ENCODE measurements at regions of chr2 and their contacts with region 1.

Region 1: GRCh38 chr2:66587216-66587615 is 152.3 kb downstream of the MEIS1 start:
- DNase-seq: peak; percentile 52
- ATAC-seq: peak; percentile 97
- H3K4me3 ChIP-seq: no peak overlapping the region
- H3K27ac ChIP-seq: no peak overlapping the region
- H3K4me1 ChIP-seq: no peaks in the 10 kb centered on the region
- H3K27me3 ChIP-seq: peaks cover 1 to 16% of the 10 kb centered on the region in 2 experiments; a peak in 3 of 5 replicates
- CTCF ChIP-seq: peak; percentile 77
- EP300 ChIP-seq: no peak
- POLR2A ChIP-seq: no peak
- RAD21 ChIP-seq: peak; percentile 69

Region 2: GRCh38 chr2:66982766-66983165 is 395.6 kb after region 1 on chr2:
- CTCF ChIA-PET with region 1: no interaction called
- POLR2A ChIA-PET with region 1: no interaction called
- in situ Hi-C with region 1: no loop called
- intact Hi-C with region 1: no loop called
- DNase-seq: no peak
- ATAC-seq: no peak
- H3K4me3 ChIP-seq: no peak overlapping the region
- H3K27ac ChIP-seq: no peak overlapping the region
- H3K4me1 ChIP-seq: no peaks in the 10 kb centered on the region
- H3K27me3 ChIP-seq: no peaks in the 10 kb centered on the region
- CTCF ChIP-seq: peak; percentile 21; the same call in 1 of the 2 replicates
- EP300 ChIP-seq: no peak
- POLR2A ChIP-seq: no peak
- RAD21 ChIP-seq: no peak

Region 3: GRCh38 chr2:67234439-67234838 is 647.2 kb after region 1 on chr2:
- CTCF ChIA-PET with region 1: no interaction called
- POLR2A ChIA-PET with region 1: no interaction called
- in situ Hi-C with region 1: no loop called
- intact Hi-C with region 1: loop called (anchors 5 kb)
- DNase-seq: no peak
- ATAC-seq: peak; percentile 48; the same call in 2 of the 3 replicates
- H3K4me3 ChIP-seq: no peak overlapping the region
- H3K27ac ChIP-seq: no peak overlapping the region
- H3K4me1 ChIP-seq: no peaks in the 10 kb centered on the region
- H3K27me3 ChIP-seq: no peaks in the 10 kb centered on the region
- CTCF ChIP-seq: no peak; the same call in 1 of the 2 replicates
- EP300 ChIP-seq: no peak
- POLR2A ChIP-seq: no peak
- RAD21 ChIP-seq: 0 out of 2 replicates have a peak, but pooled peaks have one; percentile 13